ENCODE measurements at regions of chr19 and their contacts with region 1.

Region 1: DNA sequence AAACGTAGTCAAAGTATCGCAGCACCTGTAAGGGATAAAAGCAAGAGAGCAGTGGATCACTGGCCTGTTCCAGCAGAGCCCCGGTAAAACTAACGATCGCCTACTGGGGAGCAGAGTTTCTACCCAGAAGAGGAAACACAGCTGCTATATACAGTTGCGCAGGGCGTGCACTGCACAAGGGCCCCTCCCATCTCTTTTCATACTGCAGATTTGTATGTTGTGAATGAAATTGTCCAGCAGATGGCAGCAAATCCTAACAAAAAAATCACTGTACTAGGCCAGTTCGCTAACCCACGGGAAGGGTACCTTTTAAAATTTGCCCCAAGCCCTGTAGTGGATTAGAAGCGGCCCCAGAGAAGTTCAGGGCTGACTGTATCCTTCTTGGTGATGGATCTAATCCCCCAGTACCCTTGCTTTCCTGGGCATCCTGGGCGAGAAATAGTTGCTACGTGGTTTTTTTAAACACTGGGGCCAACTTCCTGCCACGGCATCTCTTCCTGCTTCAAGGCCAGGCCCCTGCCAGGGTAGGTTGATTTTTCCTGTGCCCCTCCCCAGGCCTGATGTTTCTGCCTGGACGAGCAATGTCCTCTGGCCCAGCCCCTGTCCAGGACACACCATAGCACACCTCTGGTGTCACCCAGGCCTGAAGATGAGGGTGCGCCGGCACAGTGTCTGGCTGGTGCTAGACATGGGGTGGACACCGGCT is 127.0 kb downstream of the IER2 start:
- DNase-seq: peak; percentile 36
- ATAC-seq: peak; percentile 94
- H3K4me3 Mint-ChIP-seq: peak overlapping the region; percentile 56
- H3K27ac Mint-ChIP-seq: peak overlapping the region; percentile 68
- H3K4me1 Mint-ChIP-seq: peaks cover 16% of the 10 kb centered on the region
- H3K27me3 Mint-ChIP-seq: peaks cover 15% of the 10 kb centered on the region
- CTCF ChIP-seq: peak; percentile 7

Region 2: DNA sequence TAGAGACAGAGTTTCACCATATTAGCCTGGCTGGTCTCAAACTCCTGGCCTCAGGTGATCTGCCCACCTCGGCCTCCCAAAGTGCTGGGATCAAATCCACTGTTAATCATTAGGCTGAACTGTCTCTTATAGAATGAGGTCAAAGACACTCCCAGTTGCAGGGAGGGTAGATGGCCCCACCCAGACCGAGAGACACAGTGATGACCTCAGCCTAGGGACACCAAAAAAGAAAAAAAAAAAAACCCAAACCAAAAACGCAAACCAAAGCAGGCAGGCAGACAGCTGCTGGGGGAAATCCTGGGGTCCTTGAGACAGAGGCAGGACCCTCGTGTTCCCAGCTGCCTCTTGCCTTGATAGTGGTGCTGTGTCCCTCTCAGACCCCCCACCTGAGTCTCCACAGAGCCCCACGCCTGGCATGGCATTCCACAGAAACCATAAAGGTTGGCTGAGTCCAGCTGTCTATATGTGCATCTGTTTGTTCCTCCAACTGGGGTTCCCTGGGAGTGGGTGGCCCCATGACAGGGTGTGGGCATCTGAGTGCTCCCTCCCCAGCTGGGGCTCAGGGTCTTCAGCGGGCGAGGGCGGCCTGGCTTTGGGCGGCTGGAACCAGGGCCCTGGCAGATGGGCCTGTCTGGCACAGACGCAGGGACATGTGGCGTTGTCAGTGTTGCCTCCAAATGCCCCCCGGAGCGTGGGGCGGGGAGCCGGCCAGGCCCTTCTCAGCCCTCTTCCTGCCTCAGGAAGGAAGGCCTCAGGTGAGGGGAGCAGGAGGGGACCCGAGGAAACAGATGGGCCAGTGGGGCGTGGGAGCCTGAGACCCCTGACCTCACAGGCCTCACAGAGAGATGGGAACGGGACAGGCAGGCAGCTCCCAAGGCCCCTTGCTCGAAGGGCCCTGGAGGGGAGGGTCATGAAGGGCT is 302.7 kb before region 1 on chr19:
- CTCF ChIA-PET with region 1: interaction called, 5 read pairs
- POLR2A ChIA-PET with region 1: interaction called, 4 read pairs
- intact Hi-C with region 1: loop called (anchors 5 kb)
- DNase-seq: no peak
- ATAC-seq: no peak
- H3K4me3 Mint-ChIP-seq: no peak overlapping the region
- H3K27ac Mint-ChIP-seq: no peak overlapping the region
- H3K4me1 Mint-ChIP-seq: peaks cover 6% of the 10 kb centered on the region
- H3K27me3 Mint-ChIP-seq: peaks cover 7% of the 10 kb centered on the region
- CTCF ChIP-seq: no peak

Region 3: GRCh38 chr19:13588957-13589833 is 311.9 kb after region 1 on chr19:
- CTCF ChIA-PET with region 1: interaction called, 39 read pairs
- POLR2A ChIA-PET with region 1: interaction called, 11 read pairs
- intact Hi-C with region 1: loop called (anchors 1 kb)
- DNase-seq: peak; percentile 82
- ATAC-seq: peak; percentile 95
- H3K4me3 Mint-ChIP-seq: no peak overlapping the region
- H3K27ac Mint-ChIP-seq: no peak overlapping the region
- H3K4me1 Mint-ChIP-seq: peaks cover 4% of the 10 kb centered on the region
- H3K27me3 Mint-ChIP-seq: peaks cover 15% of the 10 kb centered on the region
- CTCF ChIP-seq: peak; percentile 43

Region 4: GRCh38 chr19:13718733-13719132 is 441.5 kb after region 1 on chr19:
- CTCF ChIA-PET with region 1: interaction called, 7 read pairs
- POLR2A ChIA-PET with region 1: interaction called, 3 read pairs
- intact Hi-C with region 1: loop called (anchors 1 kb)
- DNase-seq: no peak
- ATAC-seq: no peak
- H3K4me3 Mint-ChIP-seq: no peak overlapping the region
- H3K27ac Mint-ChIP-seq: no peak overlapping the region
- H3K4me1 Mint-ChIP-seq: no peaks in the 10 kb centered on the region
- H3K27me3 Mint-ChIP-seq: peaks cover 6% of the 10 kb centered on the region
- CTCF ChIP-seq: no peak

Measured in activated B cell treated with CpG ODN at 0.5 μM for 24 hours (primary cell).